ENCODE measurements at regions of chr16 and their contacts with region 1.

Region 1: DNA sequence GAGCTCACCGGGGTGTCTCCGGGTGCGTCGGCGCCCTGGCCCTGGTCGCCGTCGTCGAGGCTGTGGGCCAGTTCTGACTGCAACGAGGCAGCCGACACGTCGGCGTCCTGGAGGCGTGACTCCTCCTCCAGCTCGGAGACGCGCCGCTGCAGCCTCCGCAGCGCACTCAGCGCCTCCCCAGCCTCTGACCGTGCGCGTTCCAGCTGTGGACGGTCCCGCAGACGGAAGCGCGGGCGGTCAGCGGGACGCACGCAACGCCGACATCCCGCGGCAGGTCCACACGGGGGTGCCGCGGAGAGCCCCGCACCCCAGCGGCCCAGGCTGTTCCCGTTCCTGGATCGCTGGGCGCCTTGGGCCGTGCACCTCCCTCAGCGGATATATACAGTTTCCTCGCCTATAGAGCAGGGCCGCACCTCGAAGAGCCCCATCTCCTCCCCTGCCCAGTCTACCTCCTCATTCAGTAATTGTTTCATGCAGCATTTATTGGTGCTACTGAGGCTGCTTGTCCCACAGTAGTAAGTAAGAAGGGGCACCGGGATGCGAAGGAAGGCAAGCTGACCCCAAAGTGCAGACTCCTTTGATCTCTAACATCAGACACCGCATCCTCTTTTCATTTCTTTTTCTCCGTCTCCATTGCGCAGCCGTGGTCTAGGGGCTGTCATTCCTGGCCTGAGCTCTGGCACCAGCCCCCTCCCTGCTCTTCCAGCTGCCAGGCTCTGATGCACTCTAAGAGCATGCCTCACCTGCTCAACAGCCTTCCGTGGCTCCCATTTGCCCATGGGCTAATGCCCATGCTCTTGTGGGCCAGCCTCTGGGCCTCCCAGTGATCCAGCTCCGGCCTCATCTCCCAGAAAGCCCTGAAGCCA is 5.9 kb downstream of the THOC6 start:
- DNase-seq: no peak
- H3K27ac ChIP-seq: no peak overlapping the region
- CTCF ChIP-seq: no peak

Region 2: GRCh38 chr16:2919511-2920255 is 110.1 kb before region 1 on chr16:
- CTCF ChIA-PET with region 1: no interaction called
- POLR2A ChIA-PET with region 1: no interaction called
- DNase-seq: peak; percentile 55
- H3K27ac ChIP-seq: peak overlapping the region; percentile 95
- CTCF ChIP-seq: peak; percentile 87

Region 3: DNA sequence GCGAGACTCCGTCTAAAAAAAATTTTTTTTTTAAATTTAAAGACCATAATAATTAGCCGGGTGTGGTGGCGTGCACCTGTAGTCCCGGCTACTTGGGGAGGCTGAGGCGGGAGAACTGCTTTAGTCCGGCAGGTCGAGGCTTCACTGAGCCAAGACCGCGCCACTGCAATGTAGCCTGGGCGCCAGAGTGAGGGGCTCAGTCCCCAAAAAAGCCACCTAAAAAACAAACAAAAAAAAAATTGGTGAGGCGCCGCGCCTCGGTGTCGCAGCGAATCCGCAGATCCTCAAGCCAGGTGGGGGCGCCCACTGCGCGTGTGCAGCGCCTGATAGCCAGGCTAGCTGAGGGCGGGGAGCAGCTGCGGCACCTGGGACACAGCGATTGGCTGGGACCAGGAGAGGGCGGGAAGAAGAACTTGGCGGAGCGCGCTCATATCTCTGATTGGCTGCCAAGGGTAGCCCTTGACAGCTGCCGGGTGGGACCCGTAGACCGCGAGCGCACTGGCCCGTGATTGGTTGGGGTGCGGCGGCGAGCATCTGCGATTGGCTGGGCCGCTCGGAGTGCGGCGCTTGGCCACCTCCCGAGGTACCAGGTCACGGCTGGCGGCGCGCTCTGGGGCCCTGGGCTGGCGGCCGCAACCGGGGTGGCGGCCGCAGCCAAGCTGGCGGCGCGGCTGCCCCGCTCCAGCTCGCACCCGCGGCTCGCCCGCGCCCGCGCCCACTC is 26.0 kb before region 1 on chr16:
- CTCF ChIA-PET with region 1: interaction called, 19 read pairs
- POLR2A ChIA-PET with region 1: interaction called, 6 read pairs
- DNase-seq: peak; percentile 99
- H3K27ac ChIP-seq: no peak overlapping the region
- CTCF ChIP-seq: peak; percentile 86

Region 4: DNA sequence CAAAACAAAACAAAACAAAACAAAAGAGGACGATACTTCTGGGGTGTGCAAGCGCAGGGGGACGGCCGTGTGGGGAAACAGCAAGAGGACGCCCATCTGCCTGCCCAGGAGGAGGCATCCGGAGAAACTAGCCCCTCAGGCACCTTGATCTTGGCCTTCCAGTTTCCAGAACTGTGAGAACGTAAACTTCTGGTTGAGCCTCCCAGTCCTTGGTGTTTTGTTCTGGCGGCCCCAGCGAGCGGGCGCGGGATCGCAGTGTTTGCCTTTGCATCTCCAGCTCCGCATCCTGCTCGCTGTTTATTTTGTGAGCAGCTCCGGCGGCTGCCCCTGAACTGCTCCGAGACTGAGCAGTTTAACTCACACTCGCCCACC is 15.6 kb after region 1 on chr16:
- CTCF ChIA-PET with region 1: interaction called, 12 read pairs
- POLR2A ChIA-PET with region 1: no interaction called
- DNase-seq: no peak
- H3K27ac ChIP-seq: no peak overlapping the region
- CTCF ChIP-seq: no peak

Region 5: DNA sequence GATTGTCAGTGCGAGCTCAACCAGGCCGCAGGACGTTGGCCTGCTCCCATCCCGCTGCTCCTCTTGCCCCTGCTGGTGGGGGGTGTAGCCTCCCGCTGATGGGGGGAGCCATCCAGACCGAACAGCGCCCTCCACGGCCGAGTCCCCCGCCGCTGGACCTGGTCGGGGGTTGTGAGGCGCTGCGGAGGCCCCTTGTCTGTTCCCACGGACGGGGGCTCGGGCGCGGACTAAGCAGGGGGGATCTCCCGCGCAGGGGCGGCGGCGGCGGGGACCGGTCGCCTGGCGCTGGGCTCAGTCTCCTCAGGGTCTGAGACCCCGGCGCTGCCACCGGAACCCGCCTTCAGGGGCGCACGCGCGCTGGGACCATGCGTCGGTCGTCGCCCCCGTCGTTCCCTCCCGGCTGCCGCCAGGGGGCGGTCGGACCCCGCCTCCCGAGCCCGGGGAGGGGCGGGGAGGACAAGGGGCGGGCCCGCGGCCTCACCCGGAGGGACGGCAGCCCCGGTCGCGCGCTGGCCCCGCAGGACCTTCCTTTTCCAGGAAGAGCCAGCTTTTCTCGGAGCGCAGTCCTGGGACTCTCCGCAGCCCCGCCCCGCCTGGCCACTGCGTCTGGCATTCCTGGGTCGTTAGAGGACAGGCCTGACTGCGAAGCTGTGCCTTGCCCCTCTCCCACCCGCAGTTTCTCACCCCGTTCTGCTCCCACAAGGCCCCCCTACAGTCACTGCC is 29.4 kb after region 1 on chr16:
- CTCF ChIA-PET with region 1: interaction called, 15 read pairs
- POLR2A ChIA-PET with region 1: no interaction called
- DNase-seq: peak; percentile 87
- H3K27ac ChIP-seq: peak overlapping the region; percentile 68
- CTCF ChIP-seq: peak; percentile 91